Left lung (tissue), 14 donors: ENCODE measurements at regions of chr9 and their contacts with region 1.

Region 1: GRCh38 chr9:97710356-97711222 is 13.4 kb upstream of the XPA start:
- DNase-seq: peak in 2 of 4 donors; percentile 48 to 66
- ATAC-seq: peak; percentile 97
- H3K4me3 ChIP-seq: no peak overlapping the region
- H3K27ac ChIP-seq: no peak overlapping the region
- H3K4me1 ChIP-seq: no peaks in the 10 kb centered on the region
- H3K27me3 ChIP-seq: peaks cover 6 to 31% of the 10 kb centered on the region in 2 donors
- CTCF ChIP-seq: peak; percentile 76 to 93

Region 2: DNA sequence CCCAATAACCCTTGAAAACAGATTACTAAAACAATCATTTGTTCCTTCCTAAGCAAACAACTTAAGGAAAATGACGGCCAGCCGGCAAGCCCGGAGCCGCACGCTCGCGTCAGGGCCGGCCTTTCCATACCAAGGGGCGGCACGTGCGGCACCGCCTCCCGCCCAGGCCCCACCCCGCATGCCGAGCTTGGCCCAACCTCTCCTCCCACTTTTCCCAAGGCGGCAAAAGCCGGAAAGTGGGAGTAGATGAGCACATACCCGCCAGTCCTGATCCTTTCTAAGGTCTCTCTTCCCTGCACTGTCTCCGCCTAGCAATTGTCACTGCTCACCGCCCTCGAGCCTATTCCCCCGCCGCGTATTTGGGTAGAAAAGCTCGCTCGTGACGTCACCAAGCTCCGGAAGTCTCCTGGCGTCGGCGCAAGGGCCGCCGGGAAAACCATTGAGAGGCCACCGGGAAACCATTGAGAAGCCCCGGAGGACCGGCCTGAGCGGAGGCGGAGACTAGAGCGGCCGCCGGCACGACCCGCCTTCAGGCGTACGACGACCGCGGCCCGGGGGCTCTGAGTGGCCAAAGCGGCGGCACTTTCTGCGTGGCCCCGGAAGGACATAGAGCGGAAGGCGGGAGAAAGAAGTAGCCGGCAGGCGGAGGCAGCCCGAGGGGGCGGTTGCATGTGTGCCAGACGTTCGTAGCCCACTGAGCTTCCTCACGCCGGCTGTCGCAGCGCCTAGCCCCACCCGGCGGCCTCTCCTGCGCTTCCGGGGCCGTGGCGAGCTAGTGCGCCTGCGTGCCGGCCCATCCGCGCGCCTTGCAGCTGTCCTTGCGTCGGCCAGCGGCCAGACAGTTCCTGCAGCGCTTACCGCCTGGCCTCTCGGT is 77.4 kb before region 1 on chr9 and contains the starts of genes NCBP1 and TSTD2:
- intact Hi-C with region 1: no loop called
- DNase-seq: peak; percentile 97 to 99 (median 98)
- ATAC-seq: peak; percentile 92
- H3K4me3 ChIP-seq: peak within 1 kb of the TSS; percentile 86 to 89
- H3K27ac ChIP-seq: peak within 1 kb of the TSS; percentile 95 to 98
- H3K4me1 ChIP-seq: peaks cover 22 to 51% of the 10 kb centered on the region in 2 donors
- H3K27me3 ChIP-seq: no peaks in the 10 kb centered on the region
- CTCF ChIP-seq: peak in 1 of 2 donors; percentile 24
- polyA plus RNA-seq, gene NCBP1: 45.9 to 54.2 (median 50.3) TPM
- polyA plus RNA-seq, gene TSTD2: 33.7 to 41.5 (median 36.3) TPM

Region 3: GRCh38 chr9:97900738-97901565 is 190.4 kb after region 1 on chr9:
- intact Hi-C with region 1: loop called in 1 of 2 experiments (anchors 5 kb)
- DNase-seq: peak in 1 of 4 donors; percentile 35
- ATAC-seq: peak; percentile 88
- H3K4me3 ChIP-seq: no peak overlapping the region
- H3K27ac ChIP-seq: no peak overlapping the region
- H3K4me1 ChIP-seq: peaks cover 0 to 22% of the 10 kb centered on the region in 2 donors
- H3K27me3 ChIP-seq: no peaks in the 10 kb centered on the region
- CTCF ChIP-seq: peak; percentile 56 to 69